Activated B cell treated with CpG ODN at 0.5 μM for 24 hours (primary cell): ENCODE measurements at regions of chr2 and their contacts with region 1.

Region 1: GRCh38 chr2:179049546-179050311 is at the start of gene CCDC141:
- DNase-seq: peak; percentile 26
- ATAC-seq: peak; percentile 86
- H3K4me3 Mint-ChIP-seq: peak within 1 kb of the TSS; percentile 89
- H3K27ac Mint-ChIP-seq: peak within 1 kb of the TSS; percentile 96
- H3K4me1 Mint-ChIP-seq: peaks cover 59% of the 10 kb centered on the region
- H3K27me3 Mint-ChIP-seq: no peaks in the 10 kb centered on the region
- CTCF ChIP-seq: no peak
- total RNA-seq, gene CCDC141: 32.1 and 38.8 TPM in 2 replicates

Region 2: DNA sequence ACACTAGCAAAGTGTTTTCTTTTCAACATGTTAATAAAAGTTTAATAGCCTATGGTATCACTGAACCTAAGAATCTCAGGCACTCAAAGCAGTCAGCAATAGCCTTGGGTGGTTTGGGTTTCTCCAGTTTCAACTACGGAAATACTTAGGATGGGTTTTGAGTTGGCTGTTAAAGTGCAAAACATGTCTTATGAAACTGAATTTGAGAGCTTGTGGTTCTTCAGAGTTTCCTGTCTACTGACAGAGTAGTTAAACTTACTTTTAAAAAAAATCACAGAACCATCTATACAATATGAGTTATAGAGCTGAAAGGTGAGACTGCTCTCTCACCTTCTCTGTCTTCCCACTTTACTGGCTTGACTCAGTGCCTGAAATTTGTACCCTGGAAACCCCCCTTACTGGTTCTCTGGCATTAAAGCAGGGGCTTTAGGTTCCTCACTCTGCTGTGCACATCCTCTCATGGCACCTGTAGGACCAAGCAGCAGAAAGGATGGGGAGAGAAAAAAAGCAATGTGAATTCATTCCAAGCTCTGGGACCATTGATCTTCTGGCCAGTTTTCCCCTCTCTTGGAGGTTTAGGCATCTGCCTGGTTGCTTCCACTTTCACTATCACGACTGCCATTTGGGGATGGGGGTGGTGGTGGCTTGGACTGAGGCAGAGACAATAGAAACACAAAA is 17.9 kb before region 1 on chr2:
- CTCF ChIA-PET with region 1: interaction called, 6 read pairs
- POLR2A ChIA-PET with region 1: interaction called, 27 read pairs
- intact Hi-C with region 1: loop called (anchors 1 kb)
- DNase-seq: no peak
- ATAC-seq: peak; percentile 85
- H3K4me3 Mint-ChIP-seq: peak overlapping the region; percentile 76
- H3K27ac Mint-ChIP-seq: peak overlapping the region; percentile 89
- H3K4me1 Mint-ChIP-seq: peaks cover 25% of the 10 kb centered on the region
- H3K27me3 Mint-ChIP-seq: no peaks in the 10 kb centered on the region
- CTCF ChIP-seq: no peak

Region 3: GRCh38 chr2:179037807-179038206 is 11.9 kb before region 1 on chr2:
- CTCF ChIA-PET with region 1: interaction called, 5 read pairs
- POLR2A ChIA-PET with region 1: interaction called, 6 read pairs
- intact Hi-C with region 1: loop called (anchors 1 kb)
- DNase-seq: no peak
- ATAC-seq: no peak
- H3K4me3 Mint-ChIP-seq: no peak overlapping the region
- H3K27ac Mint-ChIP-seq: no peak overlapping the region
- H3K4me1 Mint-ChIP-seq: peaks cover 21% of the 10 kb centered on the region
- H3K27me3 Mint-ChIP-seq: no peaks in the 10 kb centered on the region
- CTCF ChIP-seq: no peak

Region 4: GRCh38 chr2:179340668-179341067 is 290.9 kb after region 1 on chr2:
- CTCF ChIA-PET with region 1: no interaction called
- POLR2A ChIA-PET with region 1: no interaction called
- intact Hi-C with region 1: no loop called
- DNase-seq: no peak
- ATAC-seq: no peak
- H3K4me3 Mint-ChIP-seq: no peak overlapping the region
- H3K27ac Mint-ChIP-seq: no peak overlapping the region
- H3K4me1 Mint-ChIP-seq: peaks cover 8% of the 10 kb centered on the region
- H3K27me3 Mint-ChIP-seq: no peaks in the 10 kb centered on the region
- CTCF ChIP-seq: no peak